ENCODE measurements at regions of chr6 and their contacts with region 1.

Region 1: DNA sequence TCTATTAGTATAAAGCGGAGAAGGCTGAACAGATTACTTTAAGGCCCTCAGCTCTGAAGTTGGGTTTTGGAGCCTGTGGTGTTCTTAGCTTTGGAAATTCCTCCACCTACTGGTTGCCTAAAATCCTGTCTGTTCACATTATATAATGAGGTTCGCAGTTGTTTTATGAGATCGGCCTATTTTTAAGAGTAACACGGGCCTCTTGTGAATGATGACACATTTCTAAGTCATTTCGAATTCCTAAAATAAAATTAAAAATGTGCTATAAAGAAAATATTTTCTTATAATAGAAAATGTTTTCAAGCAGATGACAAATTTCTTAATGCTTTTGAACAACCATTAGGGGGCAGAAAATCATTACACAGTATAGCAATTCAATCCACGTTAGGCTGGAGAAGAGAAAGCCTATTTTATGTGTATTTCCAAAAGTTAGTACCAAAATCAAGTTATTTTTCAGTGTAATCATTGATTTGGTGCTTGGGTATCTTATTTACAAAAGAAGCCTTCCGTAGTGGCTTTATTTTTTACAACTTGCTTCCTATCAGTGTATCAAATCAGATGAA is 15.8 kb upstream of the FAM8A1 start:
- DNase-seq: peak; percentile 29 to 36
- H3K4me3 ChIP-seq: no peak overlapping the region
- H3K27ac ChIP-seq: peak overlapping the region; percentile 50 to 55 (median 50)
- H3K4me1 ChIP-seq: peaks cover 0 to 5% of the 10 kb centered on the region in 2 donors
- H3K27me3 ChIP-seq: no peaks in the 10 kb centered on the region
- CTCF ChIP-seq: peak; percentile 66 to 99 (median 82)
- POLR2A ChIP-seq: no peak

Region 2: GRCh38 chr6:17156112-17156921 is 428.0 kb before region 1 on chr6:
- intact Hi-C with region 1: loop called (anchors 5 kb)
- DNase-seq: peak; percentile 75 to 82
- H3K4me3 ChIP-seq: no peak overlapping the region
- H3K27ac ChIP-seq: no peak overlapping the region
- H3K4me1 ChIP-seq: peaks cover 0 to 3% of the 10 kb centered on the region in 2 donors
- H3K27me3 ChIP-seq: no peaks in the 10 kb centered on the region
- CTCF ChIP-seq: peak; percentile 32 to 89 (median 79)
- POLR2A ChIP-seq: no peak

Region 3: DNA sequence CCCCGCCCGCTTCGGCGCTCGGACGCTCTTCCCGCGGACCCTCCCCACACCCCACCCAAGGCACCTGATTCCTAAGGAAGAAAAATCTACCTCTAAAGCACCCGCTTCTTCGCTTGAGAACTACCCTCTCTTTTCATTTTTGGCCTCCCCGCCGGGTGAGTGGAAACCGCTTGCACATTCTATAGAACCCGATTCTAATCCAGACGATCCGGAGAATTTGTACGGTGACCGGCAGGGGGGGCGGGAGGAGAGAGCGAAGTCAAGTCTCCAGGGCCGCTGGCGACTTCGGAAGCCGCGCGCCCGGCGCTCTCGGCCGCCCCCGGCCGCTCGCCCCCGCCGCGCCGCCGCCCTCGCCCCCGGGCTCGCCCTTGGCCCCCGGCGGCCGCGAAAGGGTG is 303.2 kb before region 1 on chr6 and contains the start of gene RBM24:
- intact Hi-C with region 1: loop called (anchors 5 kb)
- DNase-seq: peak; percentile 64
- H3K4me3 ChIP-seq: peak within 1 kb of the TSS; percentile 48 to 87 (median 65)
- H3K27ac ChIP-seq: peak within 1 kb of the TSS in 2 of 3 donors; percentile 55 to 60
- H3K4me1 ChIP-seq: peaks cover 0 to 5% of the 10 kb centered on the region in 2 donors
- H3K27me3 ChIP-seq: no peaks in the 10 kb centered on the region
- CTCF ChIP-seq: peak in 2 of 6 experiments; percentile 35 to 36
- POLR2A ChIP-seq: no peak
- total RNA-seq, gene RBM24: 0.45 to 5.3 (median 1.6) TPM

Region 4: DNA sequence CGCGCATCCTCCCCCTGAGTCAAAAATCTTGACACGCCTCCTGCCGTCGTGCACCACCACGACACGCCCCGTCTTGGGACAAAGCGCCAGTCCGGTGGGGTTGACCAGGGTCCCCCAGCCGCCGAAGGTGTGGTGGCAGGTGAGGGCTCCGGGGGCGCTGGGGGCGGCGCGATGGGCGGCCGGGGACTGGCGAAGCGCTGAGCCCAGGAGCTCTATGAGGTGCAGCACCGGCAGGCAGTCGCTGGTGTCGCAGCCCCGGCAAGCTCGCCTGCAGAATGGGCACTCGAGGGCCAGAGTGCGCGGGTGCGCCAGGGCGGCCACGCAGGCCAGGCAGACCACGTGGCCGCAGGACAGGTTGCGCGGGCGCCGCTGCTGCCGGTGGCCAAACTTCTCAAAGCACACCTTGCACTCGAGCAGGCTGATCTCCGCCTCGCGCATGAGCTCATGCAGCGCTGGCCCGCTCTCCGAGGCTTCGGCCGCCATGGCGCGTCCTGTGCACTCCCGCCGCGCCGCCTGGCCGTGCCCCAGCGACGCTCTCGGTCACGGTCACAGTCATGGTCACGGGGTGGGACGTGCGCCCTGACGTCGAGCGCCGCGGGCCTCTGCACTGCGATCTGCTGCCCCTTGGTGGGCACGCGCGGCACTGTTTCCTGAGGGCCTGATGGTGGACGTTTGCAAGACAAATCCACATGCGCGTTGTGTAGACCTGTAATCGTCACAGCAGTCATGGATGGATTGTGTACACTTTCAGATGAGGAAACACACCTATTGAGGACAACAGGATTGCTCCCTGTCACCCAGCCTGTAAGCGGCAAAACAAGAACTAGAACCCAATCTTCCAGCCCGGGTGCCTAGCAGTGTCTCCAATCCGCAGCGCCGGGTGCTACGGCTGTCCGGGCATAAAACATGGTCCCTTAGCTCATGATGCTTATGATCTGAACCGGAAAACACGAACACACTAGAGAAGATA is 538.1 kb after region 1 on chr6 and contains the start of gene NHLRC1:
- intact Hi-C with region 1: loop called (anchors 10 kb)
- DNase-seq: peak; percentile 94
- H3K4me3 ChIP-seq: peak within 1 kb of the TSS in 2 of 3 donors; percentile 10 to 40
- H3K27ac ChIP-seq: peak within 1 kb of the TSS; percentile 4 to 77 (median 73)
- H3K4me1 ChIP-seq: peaks cover 11 to 14% of the 10 kb centered on the region in 2 donors
- H3K27me3 ChIP-seq: no peaks in the 10 kb centered on the region
- CTCF ChIP-seq: peak; percentile 64 to 99 (median 92)
- POLR2A ChIP-seq: peak in 1 of 2 donors; percentile 73
- total RNA-seq, gene NHLRC1: 1.7 to 4.9 (median 3.5) TPM

Measured in thyroid gland (tissue), 4 donors.